Caco-2 (cell line): ENCODE measurements at regions of chr19 and their contacts with region 1.

Region 1: GRCh38 chr19:45523642-45524256 is 16.5 kb downstream of the VASP start:
- DNase-seq: peak; percentile 82 to 91
- H3K4me3 ChIP-seq: no peak overlapping the region
- H3K4me3 Mint-ChIP-seq: no peak overlapping the region
- H3K27ac Mint-ChIP-seq: no peak overlapping the region
- H3K4me1 ChIP-seq: peaks cover 15% of the 10 kb centered on the region
- H3K4me1 Mint-ChIP-seq: peaks cover 10% of the 10 kb centered on the region
- H3K27me3 ChIP-seq: no peaks in the 10 kb centered on the region
- H3K27me3 Mint-ChIP-seq: no peaks in the 10 kb centered on the region
- CTCF ChIP-seq: peak; percentile 73 to 94

Region 2: GRCh38 chr19:45569619-45570421 is 46.1 kb after region 1 on chr19:
- CTCF ChIA-PET with region 1: interaction called, 9 read pairs
- POLR2A ChIA-PET with region 1: no interaction called
- intact Hi-C with region 1: loop called (anchors 1 kb)
- DNase-seq: peak; percentile 64 to 77
- H3K4me3 ChIP-seq: no peak overlapping the region
- H3K4me3 Mint-ChIP-seq: no peak overlapping the region
- H3K27ac Mint-ChIP-seq: no peak overlapping the region
- H3K4me1 ChIP-seq: no peaks in the 10 kb centered on the region
- H3K4me1 Mint-ChIP-seq: no peaks in the 10 kb centered on the region
- H3K27me3 ChIP-seq: no peaks in the 10 kb centered on the region
- H3K27me3 Mint-ChIP-seq: no peaks in the 10 kb centered on the region
- CTCF ChIP-seq: peak; percentile 72 to 73